GM12878 (cell line): ENCODE measurements at regions of chr14 and their contacts with region 1.

Region 1: DNA sequence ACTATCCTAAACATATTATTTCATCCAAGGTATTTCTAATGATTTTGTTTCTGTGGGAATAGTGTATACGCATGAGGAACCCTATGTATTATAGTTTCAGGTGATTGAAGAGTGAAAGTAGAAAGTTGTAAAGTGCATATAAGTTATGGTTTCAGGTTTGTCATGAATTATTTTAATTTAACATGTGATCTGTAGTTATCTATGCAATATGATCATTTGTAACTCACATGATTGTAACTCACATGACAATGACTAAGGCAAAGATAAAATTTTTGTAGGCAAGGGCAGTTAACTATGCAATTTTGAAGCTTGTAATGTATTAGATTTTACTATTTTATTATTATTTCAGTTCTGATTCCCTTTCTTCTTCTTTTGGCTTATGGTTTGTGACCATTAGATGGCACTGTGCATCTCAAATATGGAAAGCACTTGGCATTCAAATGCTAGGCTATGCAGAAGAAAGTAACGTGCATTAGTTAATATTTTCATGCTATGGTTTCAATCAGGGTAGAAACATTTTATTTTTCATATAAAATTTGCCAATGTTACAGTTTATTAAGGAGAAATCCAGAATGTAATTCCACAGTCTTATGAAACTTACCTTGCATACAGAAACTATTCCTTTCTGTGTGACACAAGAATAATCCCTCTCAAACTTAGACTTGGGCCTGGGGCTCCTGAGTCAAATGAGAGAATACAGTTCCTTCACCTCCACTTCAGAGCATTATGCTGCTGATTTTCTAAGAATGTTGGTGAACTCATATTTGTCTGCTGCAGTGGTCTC is 15.8 kb upstream of the TMEM30B start:
- DNase-seq: peak; percentile 23
- ATAC-seq: peak; percentile 89
- H3K4me3 ChIP-seq: no peak overlapping the region
- H3K27ac ChIP-seq: no peak overlapping the region
- H3K4me1 ChIP-seq: peaks cover 12% of the 10 kb centered on the region
- H3K27me3 ChIP-seq: no peaks in the 10 kb centered on the region
- CTCF ChIP-seq: peak; percentile 50 to 66 (median 65)
- EP300 ChIP-seq: no peak
- POLR2A ChIP-seq: no peak
- RAD21 ChIP-seq: peak; percentile 89

Region 2: GRCh38 chr14:61090432-61091216 is 206.3 kb before region 1 on chr14:
- CTCF ChIA-PET with region 1: no interaction called
- POLR2A ChIA-PET with region 1: no interaction called
- RAD21 ChIA-PET with region 1: no interaction called
- SMC1A ChIA-PET with region 1: no interaction called
- in situ Hi-C with region 1: no loop called
- intact Hi-C with region 1: no loop called
- DNase-seq: no peak
- ATAC-seq: peak; percentile 82
- H3K4me3 ChIP-seq: no peak overlapping the region
- H3K27ac ChIP-seq: no peak overlapping the region
- H3K4me1 ChIP-seq: peaks cover 13% of the 10 kb centered on the region
- H3K27me3 ChIP-seq: no peaks in the 10 kb centered on the region
- CTCF ChIP-seq: no peak
- EP300 ChIP-seq: no peak
- POLR2A ChIP-seq: no peak
- RAD21 ChIP-seq: no peak

Region 3: GRCh38 chr14:61388173-61388975 is 91.5 kb after region 1 on chr14:
- CTCF ChIA-PET with region 1: interaction called, 7 read pairs
- POLR2A ChIA-PET with region 1: no interaction called
- RAD21 ChIA-PET with region 1: interaction called, 3 read pairs
- SMC1A ChIA-PET with region 1: interaction called, 10 read pairs
- in situ Hi-C with region 1: no loop called
- intact Hi-C with region 1: loop called (anchors 2 kb)
- DNase-seq: peak; percentile 86
- ATAC-seq: peak; percentile 74
- H3K4me3 ChIP-seq: peak overlapping the region; percentile 24; the same call in 1 of the 2 replicates
- H3K27ac ChIP-seq: peak overlapping the region; percentile 99
- H3K4me1 ChIP-seq: peaks cover 76% of the 10 kb centered on the region
- H3K27me3 ChIP-seq: no peaks in the 10 kb centered on the region
- CTCF ChIP-seq: no peak
- EP300 ChIP-seq: peak; percentile 90 to 93
- POLR2A ChIP-seq: peak; percentile 63
- RAD21 ChIP-seq: no peak

Region 4: DNA sequence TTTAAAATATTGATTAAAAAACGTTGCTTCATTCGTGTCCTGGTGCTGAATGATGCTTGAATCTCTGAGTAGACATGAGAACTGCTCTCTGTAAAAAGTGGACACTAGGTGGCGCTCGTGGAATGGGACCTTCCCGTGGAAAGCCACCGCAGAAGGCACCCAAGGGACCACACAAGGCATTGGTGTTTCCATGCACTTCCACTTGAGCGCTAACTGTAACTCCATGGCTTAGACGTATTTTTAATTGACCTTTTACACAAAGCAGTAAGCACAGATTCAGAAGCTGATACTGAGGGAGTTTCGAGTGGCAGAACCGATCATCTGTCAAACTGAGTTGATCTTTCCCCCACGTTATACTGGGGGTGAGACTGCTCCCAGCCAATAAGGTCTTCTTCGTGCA is 159.8 kb after region 1 on chr14:
- CTCF ChIA-PET with region 1: interaction called, 9 read pairs
- POLR2A ChIA-PET with region 1: interaction called, 3 read pairs
- RAD21 ChIA-PET with region 1: interaction called, 7 read pairs
- SMC1A ChIA-PET with region 1: interaction called, 15 read pairs
- in situ Hi-C with region 1: no loop called
- intact Hi-C with region 1: loop called (anchors 1 kb)
- DNase-seq: no peak
- ATAC-seq: peak; percentile 86
- H3K4me3 ChIP-seq: no peak overlapping the region
- H3K27ac ChIP-seq: no peak overlapping the region
- H3K4me1 ChIP-seq: peaks cover 6% of the 10 kb centered on the region
- H3K27me3 ChIP-seq: no peaks in the 10 kb centered on the region
- CTCF ChIP-seq: peak; percentile 77 to 80 (median 80)
- EP300 ChIP-seq: no peak
- POLR2A ChIP-seq: no peak
- RAD21 ChIP-seq: peak; percentile 73